ENCODE measurements at regions of chr15 and their contacts with region 1.

Region 1: DNA sequence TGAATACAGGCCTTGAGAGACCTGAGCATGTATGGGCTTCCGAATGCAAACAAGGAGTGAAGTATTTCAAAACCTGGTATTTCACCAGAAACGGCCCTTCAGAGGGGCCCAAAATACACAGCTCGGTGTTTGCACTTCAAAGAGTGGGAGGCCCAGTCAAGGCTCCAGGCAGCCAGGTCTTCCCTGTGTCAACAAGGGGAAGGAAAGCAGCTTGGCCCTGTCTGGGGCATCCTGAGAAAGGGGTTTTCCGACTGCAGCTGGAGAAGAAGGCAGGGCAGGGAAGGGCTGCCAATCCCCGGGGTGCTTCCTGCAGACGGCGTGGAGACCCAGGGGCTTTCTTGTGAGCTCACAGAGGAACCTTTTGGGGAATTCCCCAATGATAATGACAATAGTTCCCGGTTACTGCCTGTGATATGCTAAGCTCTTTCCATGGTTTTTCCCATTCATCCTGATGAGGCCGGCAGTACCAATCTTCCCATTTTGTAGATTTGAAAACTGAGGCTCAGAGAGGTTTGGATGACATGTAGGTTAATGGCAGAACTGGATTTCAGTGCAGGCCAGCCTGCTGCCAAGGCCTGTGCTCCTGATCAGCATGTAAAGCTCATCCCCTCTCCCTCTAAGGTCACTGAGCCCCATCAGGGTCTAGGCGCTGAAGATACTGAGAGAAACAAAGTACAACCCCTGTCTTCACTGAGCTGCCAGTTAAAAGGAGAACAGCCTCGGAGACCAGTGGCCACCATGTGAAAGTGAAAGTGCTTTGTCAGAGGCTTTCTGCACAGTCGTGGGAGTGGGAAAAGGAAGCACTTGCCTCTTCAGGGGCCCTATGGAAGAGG is 43.0 kb upstream of the TLE3 start:
- DNase-seq: peak; percentile 87 to 98 (median 88)
- H3K4me3 ChIP-seq: peak overlapping the region in 1 of 3 experiments; percentile 36
- H3K4me3 Mint-ChIP-seq: peak overlapping the region; percentile 63 to 82
- H3K27ac ChIP-seq: peak overlapping the region; percentile 75 to 89
- H3K27ac Mint-ChIP-seq: peak overlapping the region; percentile 94 to 98 (median 97)
- H3K4me1 ChIP-seq: peaks cover 36 to 39% of the 10 kb centered on the region in 2 donors
- H3K4me1 Mint-ChIP-seq: peaks cover 49% of the 10 kb centered on the region
- H3K27me3 ChIP-seq: no peaks in the 10 kb centered on the region
- H3K27me3 Mint-ChIP-seq: peaks cover 16 to 28% (median 17%) of the 10 kb centered on the region in 3 donors
- CTCF ChIP-seq: no peak

Region 2: DNA sequence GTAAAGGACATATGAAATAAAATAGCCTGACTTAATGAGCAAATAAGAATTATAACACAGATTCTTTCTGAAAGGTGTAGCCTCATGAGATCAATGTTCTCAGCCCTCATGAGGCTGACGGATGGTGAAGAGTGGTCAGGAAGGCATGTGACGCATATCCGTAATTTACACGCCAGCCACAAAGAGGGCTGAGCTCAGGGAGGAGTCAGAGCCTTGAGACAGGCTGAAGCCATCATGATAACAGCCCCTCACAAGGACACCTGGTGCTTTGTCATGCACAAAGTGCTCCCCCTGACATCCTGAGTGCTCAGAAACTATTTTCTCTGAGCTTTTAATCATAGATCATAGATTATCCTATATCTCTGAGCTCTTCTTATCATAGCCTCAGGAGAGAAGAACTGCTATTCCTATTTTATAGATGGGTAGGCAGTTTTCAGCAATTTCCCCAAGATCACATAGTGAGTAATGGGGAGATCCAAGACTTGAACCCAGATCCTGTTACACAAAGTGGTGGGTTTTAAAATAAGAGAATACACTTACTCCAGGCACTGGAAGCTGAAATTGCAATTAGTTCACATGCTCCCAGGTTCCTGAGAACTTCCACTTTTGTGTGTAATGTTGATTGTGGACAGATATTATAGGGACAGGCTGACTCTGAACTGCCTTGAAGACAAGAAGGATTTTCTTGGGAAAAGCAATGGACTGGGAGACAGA is 421.1 kb before region 1 on chr15:
- intact Hi-C with region 1: loop called in 1 of 2 experiments (anchors 5 kb)
- DNase-seq: peak; percentile 92 to 96 (median 93)
- H3K4me3 ChIP-seq: no peak overlapping the region
- H3K4me3 Mint-ChIP-seq: no peak overlapping the region
- H3K27ac ChIP-seq: peak overlapping the region; percentile 95
- H3K27ac Mint-ChIP-seq: peak overlapping the region; percentile 99 to 100 (median 100)
- H3K4me1 ChIP-seq: peaks cover 87 to 97% of the 10 kb centered on the region in 2 donors
- H3K4me1 Mint-ChIP-seq: peaks cover 93% of the 10 kb centered on the region
- H3K27me3 ChIP-seq: no peaks in the 10 kb centered on the region
- H3K27me3 Mint-ChIP-seq: peaks cover 0 to 4% (median 2%) of the 10 kb centered on the region in 3 donors
- CTCF ChIP-seq: no peak

Region 3: GRCh38 chr15:70023064-70023768 is 117.5 kb before region 1 on chr15:
- intact Hi-C with region 1: no loop called
- DNase-seq: peak; percentile 94 to 98 (median 98)
- H3K4me3 ChIP-seq: no peak overlapping the region
- H3K4me3 Mint-ChIP-seq: no peak overlapping the region
- H3K27ac ChIP-seq: peak overlapping the region; percentile 45 to 60
- H3K27ac Mint-ChIP-seq: peak overlapping the region; percentile 85 to 98 (median 96)
- H3K4me1 ChIP-seq: peaks cover 21 to 25% of the 10 kb centered on the region in 2 donors
- H3K4me1 Mint-ChIP-seq: peaks cover 33% of the 10 kb centered on the region
- H3K27me3 ChIP-seq: no peaks in the 10 kb centered on the region
- H3K27me3 Mint-ChIP-seq: peaks cover 4 to 10% (median 6%) of the 10 kb centered on the region in 3 donors
- CTCF ChIP-seq: no peak

Region 4: GRCh38 chr15:70245932-70246331 is 105.2 kb after region 1 on chr15:
- intact Hi-C with region 1: loop called in 1 of 2 experiments (anchors 10 kb)
- DNase-seq: peak; percentile 94 to 98 (median 97)
- H3K4me3 ChIP-seq: peak overlapping the region in 1 of 3 experiments; percentile 49
- H3K4me3 Mint-ChIP-seq: peak overlapping the region; percentile 37 to 67
- H3K27ac ChIP-seq: peak overlapping the region; percentile 76 to 83
- H3K27ac Mint-ChIP-seq: peak overlapping the region; percentile 88 to 95 (median 91)
- H3K4me1 ChIP-seq: peaks cover 59 to 64% of the 10 kb centered on the region in 2 donors
- H3K4me1 Mint-ChIP-seq: peaks cover 66% of the 10 kb centered on the region
- H3K27me3 ChIP-seq: no peaks in the 10 kb centered on the region
- H3K27me3 Mint-ChIP-seq: peaks cover 9 to 11% (median 11%) of the 10 kb centered on the region in 3 donors
- CTCF ChIP-seq: no peak

Region 5: DNA sequence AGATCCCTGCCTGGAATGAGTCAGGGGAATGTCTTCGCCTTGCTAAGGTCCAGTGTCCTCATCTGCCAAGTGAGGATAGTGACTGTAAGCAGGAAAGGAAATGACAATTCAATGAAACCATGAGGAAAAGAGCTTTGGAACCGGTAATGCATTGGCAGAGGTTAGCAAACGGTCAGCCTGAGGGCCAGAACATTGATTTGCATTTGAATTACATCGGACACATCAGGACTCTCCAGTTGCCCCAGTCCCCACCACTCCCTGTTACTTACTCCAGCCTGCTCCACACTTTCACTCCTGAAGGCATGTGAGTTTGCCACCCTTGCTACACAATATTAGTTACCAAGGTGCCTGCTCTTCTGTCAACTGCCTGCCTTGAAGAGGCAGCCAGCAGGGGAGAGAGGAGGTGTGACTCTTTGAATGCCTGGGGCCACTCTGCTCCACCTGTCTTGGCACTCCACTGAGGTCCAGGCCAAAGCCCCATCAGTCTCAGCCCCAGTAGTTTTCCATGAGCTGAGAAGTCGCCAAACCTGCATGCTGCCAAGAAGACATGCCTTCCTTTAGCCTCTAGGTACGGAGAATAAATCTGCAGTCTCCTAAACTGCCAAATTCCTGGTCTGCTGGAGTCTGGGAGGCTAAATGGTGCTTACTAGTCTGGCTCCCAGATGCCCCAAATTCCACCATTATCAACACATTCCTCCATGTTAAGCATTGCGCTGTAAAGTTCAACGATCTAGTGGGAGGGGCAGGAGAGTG is 148.6 kb after region 1 on chr15:
- intact Hi-C with region 1: no loop called
- DNase-seq: no peak
- H3K4me3 ChIP-seq: no peak overlapping the region
- H3K4me3 Mint-ChIP-seq: no peak overlapping the region
- H3K27ac ChIP-seq: no peak overlapping the region
- H3K27ac Mint-ChIP-seq: no peak overlapping the region
- H3K4me1 ChIP-seq: peaks cover 0 to 7% of the 10 kb centered on the region in 2 donors
- H3K4me1 Mint-ChIP-seq: peaks cover 12% of the 10 kb centered on the region
- H3K27me3 ChIP-seq: no peaks in the 10 kb centered on the region
- H3K27me3 Mint-ChIP-seq: peaks cover 0 to 8% (median 2%) of the 10 kb centered on the region in 3 donors
- CTCF ChIP-seq: no peak

Region 6: GRCh38 chr15:70466895-70467529 is 326.3 kb after region 1 on chr15:
- intact Hi-C with region 1: loop called in 1 of 2 experiments (anchors 5 kb)
- DNase-seq: peak; percentile 57 to 69 (median 60)
- H3K4me3 ChIP-seq: no peak overlapping the region
- H3K4me3 Mint-ChIP-seq: no peak overlapping the region
- H3K27ac ChIP-seq: no peak overlapping the region
- H3K27ac Mint-ChIP-seq: peak overlapping the region in 4 of 7 donors; percentile 23 to 83 (median 64)
- H3K4me1 ChIP-seq: peaks cover 27 to 43% of the 10 kb centered on the region in 2 donors
- H3K4me1 Mint-ChIP-seq: peaks cover 45% of the 10 kb centered on the region
- H3K27me3 ChIP-seq: no peaks in the 10 kb centered on the region
- H3K27me3 Mint-ChIP-seq: peaks cover 6 to 23% (median 7%) of the 10 kb centered on the region in 3 donors
- CTCF ChIP-seq: peak; percentile 58

Region 7: GRCh38 chr15:70504299-70504951 is 363.7 kb after region 1 on chr15:
- intact Hi-C with region 1: loop called in 1 of 2 experiments (anchors 5 kb)
- DNase-seq: peak; percentile 88 to 96 (median 93)
- H3K4me3 ChIP-seq: peak overlapping the region in 1 of 3 experiments; percentile 47
- H3K4me3 Mint-ChIP-seq: peak overlapping the region; percentile 45 to 74
- H3K27ac ChIP-seq: peak overlapping the region; percentile 50 to 73
- H3K27ac Mint-ChIP-seq: peak overlapping the region; percentile 87 to 96 (median 93)
- H3K4me1 ChIP-seq: peaks cover 64 to 67% of the 10 kb centered on the region in 2 donors
- H3K4me1 Mint-ChIP-seq: peaks cover 73% of the 10 kb centered on the region
- H3K27me3 ChIP-seq: peaks cover 0 to 2% of the 10 kb centered on the region in 2 donors
- H3K27me3 Mint-ChIP-seq: peaks cover 5 to 19% (median 15%) of the 10 kb centered on the region in 3 donors
- CTCF ChIP-seq: no peak

Measured in CD14-positive monocyte (primary cell).